ENCODE measurements at regions of chr14 and their contacts with region 1.

Region 1: GRCh38 chr14:77040059-77040740 is 11.7 kb upstream of the IRF2BPL start:
- DNase-seq: peak; percentile 83
- H3K4me3 Mint-ChIP-seq: peak overlapping the region; percentile 80
- H3K27ac Mint-ChIP-seq: peak overlapping the region; percentile 91
- H3K4me1 Mint-ChIP-seq: peaks cover 85% of the 10 kb centered on the region
- H3K27me3 Mint-ChIP-seq: no peaks in the 10 kb centered on the region

Region 2: GRCh38 chr14:76904740-76905438 is 135.3 kb before region 1 on chr14:
- intact Hi-C with region 1: no loop called
- DNase-seq: no peak
- H3K4me3 Mint-ChIP-seq: no peak overlapping the region
- H3K27ac Mint-ChIP-seq: no peak overlapping the region
- H3K4me1 Mint-ChIP-seq: peaks cover 18% of the 10 kb centered on the region
- H3K27me3 Mint-ChIP-seq: peaks cover 4% of the 10 kb centered on the region

Region 3: DNA sequence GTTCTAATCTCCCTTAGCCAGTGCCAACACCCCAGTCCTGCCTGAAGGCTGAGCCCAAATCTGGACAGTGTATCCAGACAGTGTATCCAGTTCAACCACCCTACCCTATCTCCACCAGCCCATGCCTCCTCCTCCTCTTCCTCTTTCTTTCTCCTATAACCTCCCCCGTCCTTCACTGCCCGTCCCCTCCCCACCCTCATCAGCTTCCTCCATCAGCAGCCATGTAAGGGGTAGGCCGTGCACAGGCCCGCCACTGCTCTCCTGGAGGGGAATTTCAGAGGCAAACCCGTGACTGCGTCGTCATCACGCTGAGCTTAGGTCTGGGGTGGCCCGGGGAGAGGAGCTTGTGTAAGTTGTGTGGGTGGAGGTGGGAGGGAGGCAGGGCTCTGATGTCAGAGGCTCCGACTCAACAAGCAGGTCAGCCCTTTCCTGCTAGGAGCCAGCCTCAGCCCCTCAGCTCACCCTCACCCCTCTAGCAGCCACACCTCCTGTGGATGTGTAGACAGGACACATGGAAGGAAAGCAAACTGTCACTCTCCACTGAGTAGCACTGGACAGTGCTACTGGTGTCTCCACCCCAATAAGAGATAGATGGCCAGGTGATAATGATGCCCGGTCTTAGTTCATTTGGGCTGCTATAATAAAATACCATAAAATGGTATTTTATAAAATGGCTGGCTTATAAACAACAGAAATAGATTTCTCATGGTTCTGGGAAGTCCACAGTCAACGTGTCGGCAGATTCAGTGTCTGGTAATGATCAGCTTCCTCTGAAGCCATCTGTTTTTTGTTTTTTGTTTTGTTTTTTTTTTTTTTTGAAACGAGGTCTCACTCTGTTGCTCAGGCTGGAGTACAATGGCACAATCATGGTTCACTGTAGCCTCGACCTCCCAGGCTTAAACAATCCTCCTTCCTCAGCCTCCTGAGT is 62.1 kb before region 1 on chr14:
- intact Hi-C with region 1: no loop called
- DNase-seq: peak; percentile 85
- H3K4me3 Mint-ChIP-seq: peak overlapping the region; percentile 45
- H3K27ac Mint-ChIP-seq: peak overlapping the region; percentile 90
- H3K4me1 Mint-ChIP-seq: peaks cover 27% of the 10 kb centered on the region
- H3K27me3 Mint-ChIP-seq: no peaks in the 10 kb centered on the region

Region 4: DNA sequence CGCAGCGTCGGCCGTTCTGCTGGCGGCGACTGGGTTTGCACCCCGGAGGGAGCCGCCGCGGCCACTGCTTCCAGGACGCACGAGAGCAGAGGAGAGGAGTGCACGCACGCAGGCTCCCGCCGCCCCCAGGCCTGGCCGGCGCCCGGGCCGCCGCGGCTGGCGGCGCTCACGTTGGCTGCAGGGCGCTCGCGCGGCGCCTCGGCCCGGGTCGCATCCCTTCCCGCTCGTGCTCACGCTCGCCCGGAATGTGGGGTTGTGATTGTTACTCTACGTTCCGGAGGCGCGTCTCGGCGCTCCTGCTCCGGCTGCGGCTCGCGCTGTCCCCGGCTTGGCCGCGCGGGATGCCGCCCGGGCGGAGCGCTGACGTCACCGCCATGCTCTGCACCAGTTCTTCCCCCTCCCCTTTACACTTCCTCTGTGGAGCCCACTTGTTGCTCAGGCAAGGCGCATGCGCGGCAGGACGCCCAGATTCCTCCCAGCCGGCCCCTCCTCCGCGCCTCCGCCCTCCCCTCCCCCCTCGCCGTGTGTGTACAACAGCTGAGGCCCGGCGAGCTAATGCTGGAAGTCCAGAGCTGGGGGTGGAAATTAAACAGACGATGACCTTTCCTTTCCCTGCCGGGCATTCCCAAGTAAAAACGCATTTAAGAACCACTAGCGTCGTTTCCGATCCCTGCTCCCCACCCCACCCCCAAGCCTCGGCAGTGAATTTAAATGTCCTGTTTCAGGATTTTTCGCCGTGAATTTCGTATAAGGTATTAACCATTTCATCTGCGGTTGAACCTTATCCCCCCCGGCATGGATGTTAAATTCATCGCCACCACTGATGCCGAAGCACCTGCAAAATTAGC is 11.6 kb before region 1 on chr14 and contains the start of gene IRF2BPL:
- intact Hi-C with region 1: loop called (anchors 1 kb)
- DNase-seq: peak; percentile 91
- H3K4me3 Mint-ChIP-seq: peak within 1 kb of the TSS; percentile 94
- H3K27ac Mint-ChIP-seq: peak within 1 kb of the TSS; percentile 97
- H3K4me1 Mint-ChIP-seq: peaks cover 57% of the 10 kb centered on the region
- H3K27me3 Mint-ChIP-seq: no peaks in the 10 kb centered on the region
- total RNA-seq, gene IRF2BPL: 24.9 and 26.5 TPM in 2 replicates

Region 5: GRCh38 chr14:77053046-77053841 is 13.0 kb after region 1 on chr14:
- intact Hi-C with region 1: loop called (anchors 1 kb)
- DNase-seq: peak; percentile 53
- H3K4me3 Mint-ChIP-seq: no peak overlapping the region
- H3K27ac Mint-ChIP-seq: peak overlapping the region; percentile 52
- H3K4me1 Mint-ChIP-seq: peaks cover 19% of the 10 kb centered on the region
- H3K27me3 Mint-ChIP-seq: peaks cover 2% of the 10 kb centered on the region

Region 6: DNA sequence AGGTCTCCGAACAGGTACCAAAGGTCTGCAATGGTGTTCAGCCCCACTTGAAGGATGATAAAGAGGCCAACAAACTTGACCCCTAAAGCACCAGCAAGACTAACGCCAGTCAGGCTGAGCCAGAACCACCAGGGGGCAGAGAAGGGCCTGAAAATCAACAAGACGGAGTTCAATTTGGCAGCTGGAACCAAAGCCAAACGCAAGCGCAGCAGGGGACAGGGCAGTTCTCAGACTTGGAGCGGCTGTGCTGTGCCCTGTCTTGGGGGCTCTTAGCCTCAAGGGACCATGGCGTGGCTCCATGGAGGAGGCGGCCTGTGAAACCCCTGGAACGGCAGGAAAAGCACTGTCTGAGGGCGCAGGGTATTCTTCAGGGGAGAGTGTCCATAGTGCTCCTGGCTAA is 260.9 kb after region 1 on chr14:
- intact Hi-C with region 1: loop called (anchors 5 kb)
- DNase-seq: peak; percentile 16
- H3K4me3 Mint-ChIP-seq: no peak overlapping the region
- H3K27ac Mint-ChIP-seq: no peak overlapping the region
- H3K4me1 Mint-ChIP-seq: peaks cover 24% of the 10 kb centered on the region
- H3K27me3 Mint-ChIP-seq: no peaks in the 10 kb centered on the region